Activated CD4-positive, alpha-beta memory T cell treated with anti-CD3 and anti-CD28 coated beads for 36 hours (primary cell): ENCODE measurements at regions of chr1 and their contacts with region 1.

Region 1: GRCh38 chr1:226547754-226548191 is 791 bp upstream of the STUM start:
- DNase-seq: peak; percentile 75
- H3K4me3 Mint-ChIP-seq: peak overlapping the region; percentile 38
- H3K27ac Mint-ChIP-seq: no peak overlapping the region
- H3K4me1 Mint-ChIP-seq: peaks cover 14% of the 10 kb centered on the region
- H3K27me3 Mint-ChIP-seq: peaks cover 35% of the 10 kb centered on the region

Region 2: DNA sequence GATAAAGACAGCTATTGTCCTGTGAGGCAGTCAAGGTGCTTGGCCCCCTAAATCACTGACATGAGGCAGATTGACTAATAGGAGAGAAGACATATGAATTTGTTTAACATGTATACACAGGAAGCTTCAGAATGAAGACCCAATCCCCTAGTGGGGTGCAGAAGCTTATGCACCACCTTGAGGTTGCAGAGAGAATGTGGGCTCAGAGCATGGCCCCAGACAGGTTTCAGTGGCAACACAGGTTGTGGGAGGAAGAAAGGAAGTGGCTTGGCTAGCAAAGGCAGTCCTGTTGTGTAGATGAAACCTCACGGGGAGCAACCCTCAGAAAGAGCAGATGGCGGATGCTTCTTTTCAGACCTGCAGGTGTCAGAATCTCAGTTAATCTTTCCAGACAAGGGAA is 102.9 kb before region 1 on chr1:
- CTCF ChIA-PET with region 1: no interaction called
- POLR2A ChIA-PET with region 1: no interaction called
- intact Hi-C with region 1: loop called (anchors 5 kb)
- DNase-seq: peak; percentile 81
- H3K4me3 Mint-ChIP-seq: no peak overlapping the region
- H3K27ac Mint-ChIP-seq: peak overlapping the region; percentile 6
- H3K4me1 Mint-ChIP-seq: peaks cover 32% of the 10 kb centered on the region
- H3K27me3 Mint-ChIP-seq: no peaks in the 10 kb centered on the region

Region 3: GRCh38 chr1:226608699-226609505 is 61.1 kb after region 1 on chr1:
- CTCF ChIA-PET with region 1: interaction called, 16 read pairs
- POLR2A ChIA-PET with region 1: no interaction called
- intact Hi-C with region 1: loop called (anchors 1 kb)
- DNase-seq: peak; percentile 78
- H3K4me3 Mint-ChIP-seq: no peak overlapping the region
- H3K27ac Mint-ChIP-seq: no peak overlapping the region
- H3K4me1 Mint-ChIP-seq: no peaks in the 10 kb centered on the region
- H3K27me3 Mint-ChIP-seq: no peaks in the 10 kb centered on the region

Region 4: DNA sequence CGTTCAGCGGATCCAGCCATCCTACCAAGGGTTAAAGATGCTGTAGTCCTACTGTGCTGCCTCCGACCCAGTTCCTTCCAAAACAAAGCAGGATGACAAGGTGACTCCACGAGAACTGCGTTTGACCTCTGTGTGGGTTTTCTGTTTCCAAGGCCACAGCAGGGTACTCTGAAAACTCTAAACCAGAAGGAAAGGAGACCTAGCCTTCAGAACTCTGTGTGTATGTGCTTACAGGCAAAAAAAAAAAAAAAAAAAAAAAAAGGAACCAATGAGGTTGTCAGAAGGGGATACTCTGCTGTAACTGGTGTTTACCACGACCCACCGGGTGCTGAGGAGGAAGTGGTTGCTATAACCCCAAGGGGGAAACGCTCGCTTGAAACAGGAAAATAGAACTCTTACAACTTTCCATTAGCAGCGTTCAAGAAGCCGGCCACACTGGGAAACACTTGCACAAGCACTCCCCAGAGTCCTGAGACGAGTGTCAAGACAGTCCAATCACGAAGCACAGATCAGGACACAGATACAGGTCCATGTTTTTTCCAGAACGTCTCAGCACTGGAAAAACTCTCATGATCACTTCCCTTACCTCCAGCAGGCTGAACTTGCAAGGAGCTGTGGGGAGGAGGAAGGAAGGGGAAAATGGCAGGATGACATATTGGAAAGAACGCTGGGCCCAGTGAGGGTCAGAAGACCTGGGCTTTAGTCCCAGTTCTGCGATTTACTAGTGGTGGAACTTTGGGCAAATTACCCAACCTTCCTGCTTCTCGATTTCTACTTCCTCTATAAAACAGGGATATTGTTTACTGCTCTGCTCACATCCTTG is 127.3 kb after region 1 on chr1:
- CTCF ChIA-PET with region 1: no interaction called
- POLR2A ChIA-PET with region 1: no interaction called
- intact Hi-C with region 1: no loop called
- DNase-seq: peak; percentile 82
- H3K4me3 Mint-ChIP-seq: peak overlapping the region; percentile 68
- H3K27ac Mint-ChIP-seq: peak overlapping the region; percentile 93
- H3K4me1 Mint-ChIP-seq: peaks cover 96% of the 10 kb centered on the region
- H3K27me3 Mint-ChIP-seq: no peaks in the 10 kb centered on the region